ENCODE measurements at regions of chr1 and their contacts with region 1.

Region 1: DNA sequence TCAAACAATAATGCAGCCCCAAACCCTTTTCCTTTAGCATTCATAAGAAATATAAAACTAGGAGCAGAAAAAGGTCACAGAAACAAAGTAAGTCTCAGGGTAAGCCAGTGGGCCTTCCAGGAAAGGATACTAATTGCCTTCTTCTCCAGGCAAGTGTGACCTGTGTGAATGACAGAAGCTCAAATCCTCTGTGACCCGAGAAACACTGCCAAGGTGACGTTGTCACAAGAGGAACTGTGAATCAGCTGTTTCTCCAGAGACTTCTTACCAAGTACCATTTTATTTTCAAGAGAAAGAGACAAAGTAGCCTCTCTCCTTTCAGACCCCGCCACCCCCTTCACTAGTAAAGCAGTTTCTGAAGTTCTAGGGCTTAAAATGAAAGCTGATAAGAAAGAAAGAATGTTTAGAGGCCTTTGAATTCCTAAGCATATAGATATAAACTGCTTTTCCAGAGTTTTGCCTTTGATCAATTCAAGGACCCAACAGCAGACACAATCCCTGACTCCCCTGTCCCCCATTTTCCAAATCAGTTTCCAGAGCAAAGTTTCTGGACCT is 155.6 kb downstream of the NUF2 start:
- DNase-seq: no peak
- H3K4me3 ChIP-seq: no peak overlapping the region
- CTCF ChIP-seq: no peak
- POLR2A ChIP-seq: no peak

Region 2: GRCh38 chr1:165228676-165229075 is 1751.3 kb after region 1 on chr1:
- intact Hi-C with region 1: loop called (anchors 10 kb)
- DNase-seq: no peak
- H3K4me3 ChIP-seq: no peak overlapping the region
- CTCF ChIP-seq: no peak
- POLR2A ChIP-seq: no peak